A673 (cell line): ENCODE measurements at regions of chr4 and their contacts with region 1.

Region 1: DNA sequence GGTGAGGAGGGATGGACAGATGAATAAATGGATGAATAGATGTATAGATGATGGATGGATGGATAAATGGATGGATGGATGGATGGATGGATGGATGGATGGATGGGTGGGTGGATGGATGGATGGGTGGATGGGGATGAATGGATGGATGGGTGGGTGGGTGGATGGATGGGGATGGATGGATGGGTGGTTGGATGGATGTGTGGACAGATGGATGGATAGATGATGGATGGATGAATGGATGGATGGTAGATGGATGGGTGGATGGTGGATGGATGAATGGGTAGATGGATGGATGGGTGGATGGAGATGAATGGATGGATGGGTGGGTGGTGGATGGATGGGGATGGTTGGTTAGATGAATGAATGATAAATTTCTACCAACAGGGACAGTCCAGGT is 207.0 kb upstream of the PSAPL1 start:
- DNase-seq: no peak
- H3K4me3 ChIP-seq: no peak overlapping the region
- H3K27ac ChIP-seq: no peak overlapping the region
- H3K4me1 ChIP-seq: no peaks in the 10 kb centered on the region
- H3K27me3 ChIP-seq: peaks cover 3% of the 10 kb centered on the region
- CTCF ChIP-seq: no peak

Region 2: DNA sequence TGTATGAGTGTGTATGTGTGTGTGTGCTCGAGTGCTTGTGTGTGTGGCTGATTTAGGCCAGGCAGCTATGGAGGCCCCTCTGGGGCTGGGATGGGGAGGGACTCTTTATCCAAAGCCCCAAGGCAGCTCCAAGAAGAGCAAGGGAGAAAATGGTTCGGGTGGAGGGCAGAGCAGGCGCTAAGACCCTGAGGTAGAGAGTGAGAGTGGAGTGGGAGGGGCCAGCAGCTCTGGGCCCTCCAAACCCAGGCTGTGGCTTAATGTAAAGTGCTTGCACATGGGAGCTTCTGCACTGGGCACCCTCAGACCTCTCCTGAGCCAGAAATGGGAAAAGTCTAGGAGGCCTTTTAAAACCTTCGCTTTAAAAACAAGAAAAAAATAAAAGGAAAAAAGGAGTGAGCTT is 26.6 kb after region 1 on chr4:
- CTCF ChIA-PET with region 1: interaction called, 10 read pairs
- POLR2A ChIA-PET with region 1: no interaction called
- intact Hi-C with region 1: no loop called
- DNase-seq: no peak
- H3K4me3 ChIP-seq: no peak overlapping the region
- H3K27ac ChIP-seq: no peak overlapping the region
- H3K4me1 ChIP-seq: no peaks in the 10 kb centered on the region
- H3K27me3 ChIP-seq: peaks cover 37% of the 10 kb centered on the region
- CTCF ChIP-seq: no peak

Region 3: DNA sequence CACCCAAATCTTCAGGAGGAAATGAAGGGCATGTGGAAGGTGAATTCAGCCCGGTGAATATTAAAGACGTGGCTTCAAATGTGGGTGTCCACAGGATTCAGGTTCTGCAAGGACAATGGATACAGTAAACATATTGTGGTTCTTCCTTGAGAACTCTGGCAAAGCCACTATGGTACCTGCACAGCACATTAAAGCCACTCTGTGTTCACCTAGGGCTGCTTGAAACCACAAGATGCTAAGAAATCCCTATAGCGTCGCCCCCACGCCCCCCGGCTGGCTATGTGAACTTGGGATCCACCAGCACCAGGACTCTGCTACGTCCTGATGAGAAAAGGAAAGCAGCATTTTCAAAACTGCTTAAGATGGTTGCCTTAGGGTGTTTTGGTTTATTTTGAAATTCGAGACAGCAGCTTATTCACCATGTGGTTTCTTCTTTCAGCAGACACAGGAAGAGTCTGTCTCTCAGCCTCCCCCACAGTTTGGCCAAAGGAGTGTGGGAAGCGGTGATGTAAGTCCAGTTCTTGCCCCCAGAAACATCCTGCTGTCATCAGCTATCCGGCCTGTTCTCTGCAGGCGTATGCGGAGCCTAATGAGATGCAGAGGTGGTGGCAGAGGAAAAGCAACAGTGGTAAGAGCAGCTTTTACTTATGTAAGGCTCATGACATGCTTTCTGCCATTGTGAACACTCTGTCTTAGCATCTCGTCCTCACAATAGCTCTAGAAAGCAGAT is 186.4 kb after region 1 on chr4:
- CTCF ChIA-PET with region 1: no interaction called
- POLR2A ChIA-PET with region 1: no interaction called
- intact Hi-C with region 1: no loop called
- DNase-seq: peak; percentile 82
- H3K4me3 ChIP-seq: no peak overlapping the region
- H3K27ac ChIP-seq: peak overlapping the region; percentile 49
- H3K4me1 ChIP-seq: peaks cover 37% of the 10 kb centered on the region
- H3K27me3 ChIP-seq: no peaks in the 10 kb centered on the region
- CTCF ChIP-seq: no peak